MCF 10A (cell line): ENCODE measurements at regions of chr5 and their contacts with region 1.

Region 1: GRCh38 chr5:164013077-164013670 is 507.8 kb downstream of the MAT2B start:
- DNase-seq: peak; percentile 91
- H3K4me3 Mint-ChIP-seq: no peak overlapping the region
- H3K27ac Mint-ChIP-seq: no peak overlapping the region
- H3K4me1 Mint-ChIP-seq: no peaks in the 10 kb centered on the region
- H3K27me3 Mint-ChIP-seq: no peaks in the 10 kb centered on the region
- CTCF ChIP-seq: peak; percentile 80

Region 2: GRCh38 chr5:164002628-164003027 is 10.5 kb before region 1 on chr5:
- CTCF ChIA-PET with region 1: interaction called, 29 read pairs
- POLR2A ChIA-PET with region 1: no interaction called
- intact Hi-C with region 1: no loop called
- DNase-seq: peak; percentile 42
- H3K4me3 Mint-ChIP-seq: no peak overlapping the region
- H3K27ac Mint-ChIP-seq: peak overlapping the region; percentile 43
- H3K4me1 Mint-ChIP-seq: peaks cover 8% of the 10 kb centered on the region
- H3K27me3 Mint-ChIP-seq: no peaks in the 10 kb centered on the region
- CTCF ChIP-seq: no peak

Region 3: DNA sequence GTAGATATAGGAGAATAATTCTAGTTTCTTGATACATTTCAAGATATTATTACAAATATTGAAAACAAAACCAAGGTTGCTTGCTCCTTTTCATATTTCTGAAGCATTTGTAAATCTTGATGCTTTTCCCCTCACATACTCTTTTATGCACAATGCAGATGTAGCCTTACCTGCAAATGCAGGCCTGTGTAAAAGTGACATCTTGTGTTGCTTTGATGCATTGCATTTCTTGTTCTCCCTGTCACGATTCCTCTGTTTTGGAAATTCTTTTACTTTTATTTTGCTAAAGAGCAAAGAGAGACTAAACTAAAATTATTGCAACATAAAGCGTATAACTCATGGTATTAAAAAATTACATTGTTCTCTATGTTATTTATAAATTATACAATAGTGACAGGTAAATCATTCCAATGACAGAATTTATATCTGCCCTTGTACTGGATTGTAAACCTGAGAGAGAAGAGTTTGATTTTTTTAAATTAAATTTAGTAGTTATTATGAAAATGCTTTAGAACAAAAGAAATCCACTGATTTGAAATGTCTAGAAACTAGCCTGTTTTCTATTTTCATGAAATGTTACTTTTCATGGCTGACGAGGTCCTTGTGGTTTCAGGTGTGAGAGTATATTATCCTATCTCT is 462.3 kb after region 1 on chr5:
- CTCF ChIA-PET with region 1: interaction called, 73 read pairs
- POLR2A ChIA-PET with region 1: interaction called, 4 read pairs
- intact Hi-C with region 1: loop called (anchors 1 kb)
- DNase-seq: peak; percentile 70
- H3K4me3 Mint-ChIP-seq: no peak overlapping the region
- H3K27ac Mint-ChIP-seq: no peak overlapping the region
- H3K4me1 Mint-ChIP-seq: no peaks in the 10 kb centered on the region
- H3K27me3 Mint-ChIP-seq: no peaks in the 10 kb centered on the region
- CTCF ChIP-seq: peak; percentile 97

Region 4: DNA sequence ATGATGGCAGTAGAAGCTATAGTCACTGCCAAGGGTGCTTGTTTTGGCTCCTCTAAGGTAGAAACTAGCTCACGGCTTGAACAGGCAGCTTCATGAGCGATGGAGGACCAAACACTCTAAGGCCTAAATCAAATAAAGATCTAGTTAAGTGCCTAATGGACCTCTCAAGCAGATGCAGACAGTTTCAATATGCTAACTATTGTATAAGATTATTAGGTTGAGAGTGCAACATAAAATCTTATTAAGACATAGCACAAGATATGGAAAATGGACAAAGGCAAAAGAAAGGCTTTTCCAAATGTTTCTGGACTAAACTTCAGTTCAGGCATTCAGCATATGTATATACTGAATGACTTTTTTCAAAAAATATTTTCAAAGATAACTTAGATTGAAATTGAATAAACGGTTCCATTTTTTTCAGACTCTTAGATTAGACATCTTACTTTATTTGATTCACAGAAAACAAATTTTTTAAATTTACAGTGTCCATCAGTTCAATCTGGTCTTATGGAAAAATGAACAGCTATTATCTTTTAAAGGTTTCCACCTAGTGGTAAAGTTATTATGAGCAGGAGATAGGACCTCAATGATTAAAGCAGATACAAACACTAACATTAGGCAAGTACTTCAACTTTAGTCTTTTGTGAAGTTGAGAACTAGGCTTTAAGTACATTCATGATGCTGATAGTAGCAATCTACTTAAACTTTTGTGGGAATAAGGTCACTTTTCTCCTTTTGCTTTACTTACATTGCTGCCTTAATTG is 659.9 kb after region 1 on chr5:
- CTCF ChIA-PET with region 1: interaction called, 5 read pairs
- POLR2A ChIA-PET with region 1: no interaction called
- intact Hi-C with region 1: loop called (anchors 2 kb)
- DNase-seq: peak; percentile 42
- H3K4me3 Mint-ChIP-seq: no peak overlapping the region
- H3K27ac Mint-ChIP-seq: no peak overlapping the region
- H3K4me1 Mint-ChIP-seq: no peaks in the 10 kb centered on the region
- H3K27me3 Mint-ChIP-seq: no peaks in the 10 kb centered on the region
- CTCF ChIP-seq: peak; percentile 54

Region 5: DNA sequence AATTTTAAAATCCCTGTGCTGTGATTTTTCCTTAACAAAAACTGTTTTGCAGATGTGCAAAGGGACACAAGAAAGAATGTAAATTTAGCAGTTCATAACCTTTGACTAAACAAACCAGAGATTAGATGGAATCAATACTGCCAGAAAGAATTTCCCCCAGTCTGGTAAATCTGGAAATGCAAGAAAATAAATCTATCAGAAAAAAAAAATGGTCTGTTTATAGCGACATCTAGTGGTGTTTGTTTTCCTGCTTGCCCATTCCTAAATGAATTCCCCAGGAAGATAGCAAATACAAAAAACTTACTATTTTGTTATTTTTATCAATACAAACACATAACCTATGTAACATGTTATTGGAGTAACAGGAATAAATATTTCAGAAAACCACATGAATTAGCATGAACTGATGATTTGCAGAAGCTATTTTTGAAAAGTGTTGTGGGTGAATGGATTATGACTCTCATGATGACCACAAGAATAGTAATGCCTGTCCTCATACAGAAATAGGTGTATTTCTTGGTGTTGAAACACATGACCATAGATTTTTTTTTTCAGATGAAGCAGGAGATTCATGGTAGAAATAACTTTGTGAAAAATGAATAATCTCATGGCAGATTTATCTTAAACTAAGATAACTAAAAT is 1196.0 kb after region 1 on chr5:
- CTCF ChIA-PET with region 1: interaction called, 3 read pairs
- POLR2A ChIA-PET with region 1: no interaction called
- intact Hi-C with region 1: loop called (anchors 1 kb)
- DNase-seq: peak; percentile 55
- H3K4me3 Mint-ChIP-seq: no peak overlapping the region
- H3K27ac Mint-ChIP-seq: no peak overlapping the region
- H3K4me1 Mint-ChIP-seq: no peaks in the 10 kb centered on the region
- H3K27me3 Mint-ChIP-seq: no peaks in the 10 kb centered on the region
- CTCF ChIP-seq: peak; percentile 66

Region 6: DNA sequence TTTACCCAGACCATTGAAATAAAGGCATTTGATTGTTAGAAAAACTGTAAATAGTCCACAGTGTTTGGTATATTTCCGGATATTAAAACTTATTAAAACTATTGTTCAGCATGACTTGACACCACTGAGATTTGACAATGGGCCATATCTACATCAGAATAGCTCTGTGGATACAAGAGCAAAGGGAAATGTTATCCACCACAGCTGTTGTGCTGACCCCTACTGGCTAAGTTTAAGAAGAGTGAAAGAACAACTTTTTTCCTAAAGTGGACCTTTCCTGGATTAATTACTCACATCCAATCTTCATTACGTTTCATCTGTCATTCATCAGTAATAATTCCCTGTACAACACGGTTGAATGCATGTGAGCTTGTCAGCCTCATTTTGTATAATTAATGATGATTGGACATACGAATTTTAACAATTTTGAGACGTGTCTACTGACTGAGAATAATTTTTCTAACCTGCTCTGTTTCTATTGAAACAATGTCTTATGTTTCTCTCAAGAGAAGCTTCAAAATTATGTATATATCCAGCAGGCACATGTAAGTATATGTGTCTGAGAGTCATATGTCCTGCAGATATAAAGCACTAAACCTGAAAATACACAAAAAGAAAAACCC is 1444.8 kb after region 1 on chr5:
- CTCF ChIA-PET with region 1: no interaction called
- POLR2A ChIA-PET with region 1: no interaction called
- intact Hi-C with region 1: loop called (anchors 10 kb)
- DNase-seq: peak; percentile 79
- H3K4me3 Mint-ChIP-seq: no peak overlapping the region
- H3K27ac Mint-ChIP-seq: no peak overlapping the region
- H3K4me1 Mint-ChIP-seq: peaks cover 11% of the 10 kb centered on the region
- H3K27me3 Mint-ChIP-seq: no peaks in the 10 kb centered on the region
- CTCF ChIP-seq: peak; percentile 80

Region 7: DNA sequence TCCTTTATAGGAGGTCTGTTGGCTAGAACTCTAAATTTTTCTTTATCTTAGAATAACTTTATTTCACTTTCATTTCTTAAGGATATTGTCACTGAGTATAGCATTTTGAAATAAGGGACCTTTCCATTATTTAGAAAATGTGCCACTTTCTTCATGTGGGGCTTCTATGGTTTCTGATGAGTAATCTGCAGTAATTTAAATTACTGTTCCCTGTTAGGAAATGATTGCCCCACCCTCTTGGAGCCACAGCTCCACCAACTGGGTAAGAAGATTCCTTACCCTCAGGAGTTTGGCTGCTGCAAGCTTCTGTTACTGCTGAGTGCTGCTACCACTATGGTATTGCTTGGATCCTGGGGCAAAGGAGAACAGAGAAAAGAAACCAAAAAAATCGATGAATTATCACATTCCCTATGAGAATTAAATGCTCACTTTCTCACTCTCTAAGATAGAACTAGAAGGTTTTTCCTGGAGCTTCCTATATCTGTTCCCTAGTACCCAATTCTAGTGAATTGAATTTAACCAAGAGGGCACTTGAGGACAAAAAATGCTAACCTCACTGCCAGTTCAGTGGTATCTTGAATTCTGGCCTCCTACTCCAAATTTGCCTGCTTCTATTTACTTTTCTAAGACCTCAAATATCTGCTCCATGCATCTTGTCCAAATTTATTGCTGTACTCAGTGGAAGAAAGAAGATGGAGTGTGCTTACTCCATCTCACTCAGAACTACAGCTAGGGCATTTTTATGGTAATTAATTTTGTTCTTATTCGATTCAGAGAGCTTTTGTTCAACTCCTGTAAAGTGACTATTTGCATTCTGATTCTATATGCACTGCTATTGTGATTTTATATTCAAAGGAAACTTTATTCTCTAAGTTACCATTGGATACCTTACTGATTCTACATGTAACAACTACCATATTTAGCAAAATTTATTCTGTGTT is 1603.6 kb after region 1 on chr5:
- CTCF ChIA-PET with region 1: no interaction called
- POLR2A ChIA-PET with region 1: no interaction called
- intact Hi-C with region 1: loop called (anchors 10 kb)
- DNase-seq: peak; percentile 74
- H3K4me3 Mint-ChIP-seq: no peak overlapping the region
- H3K27ac Mint-ChIP-seq: no peak overlapping the region
- H3K4me1 Mint-ChIP-seq: peaks cover 22% of the 10 kb centered on the region
- H3K27me3 Mint-ChIP-seq: no peaks in the 10 kb centered on the region
- CTCF ChIP-seq: peak; percentile 26